ENCODE measurements at regions of chr17 and their contacts with region 1.

Region 1: DNA sequence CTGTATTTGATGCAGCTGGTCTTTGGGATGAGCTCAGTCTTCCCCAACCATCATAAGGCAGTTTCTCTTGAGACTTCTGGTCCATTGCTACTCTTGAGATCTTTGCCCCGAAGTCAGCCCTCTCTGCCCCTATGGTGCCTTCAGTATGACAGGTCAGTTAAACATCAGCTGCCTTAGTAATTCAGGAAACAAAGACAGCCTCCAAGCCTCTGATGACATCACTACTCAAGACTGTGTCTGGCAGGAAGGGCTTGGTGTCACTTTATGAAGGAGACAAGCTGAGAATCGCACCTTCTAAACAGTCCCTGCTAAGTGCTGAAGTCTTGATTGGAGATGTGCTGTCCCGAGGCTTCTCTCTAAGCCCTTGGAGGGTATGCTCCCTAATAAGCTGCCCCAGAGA is 104.9 kb upstream of the TBX2 start:
- DNase-seq: no peak
- H3K4me3 ChIP-seq: no peak overlapping the region
- H3K27ac ChIP-seq: no peak overlapping the region
- H3K4me1 ChIP-seq: no peaks in the 10 kb centered on the region
- H3K27me3 ChIP-seq: no peaks in the 10 kb centered on the region
- CTCF ChIP-seq: no peak
- EP300 ChIP-seq: no peak
- POLR2A ChIP-seq: no peak

Region 2: GRCh38 chr17:61235827-61236197 is 59.0 kb before region 1 on chr17:
- in situ Hi-C with region 1: loop called in 1 of 4 experiments (anchors 10 kb)
- intact Hi-C with region 1: no loop called
- DNase-seq: no peak
- H3K4me3 ChIP-seq: no peak overlapping the region
- H3K27ac ChIP-seq: peak overlapping the region in 1 of 4 donors; percentile 47
- H3K4me1 ChIP-seq: peaks cover 0 to 26% (median 1%) of the 10 kb centered on the region in 4 donors
- H3K27me3 ChIP-seq: no peaks in the 10 kb centered on the region
- CTCF ChIP-seq: no peak
- EP300 ChIP-seq: no peak
- POLR2A ChIP-seq: no peak